Common myeloid progenitor, CD34-positive (primary cell): ENCODE measurements at regions of chr12 and their contacts with region 1.

Region 1: GRCh38 chr12:66235626-66236281 is 46.7 kb downstream of the IRAK3 start:
- DNase-seq: peak; percentile 35 to 75 (median 61)
- H3K4me3 ChIP-seq: peak overlapping the region; percentile 40 to 82 (median 65)
- H3K27ac ChIP-seq: peak overlapping the region; percentile 33 to 63
- H3K4me1 ChIP-seq: peaks cover 0 to 14% (median 4%) of the 10 kb centered on the region in 4 experiments
- H3K27me3 ChIP-seq: no peaks in the 10 kb centered on the region

Region 2: DNA sequence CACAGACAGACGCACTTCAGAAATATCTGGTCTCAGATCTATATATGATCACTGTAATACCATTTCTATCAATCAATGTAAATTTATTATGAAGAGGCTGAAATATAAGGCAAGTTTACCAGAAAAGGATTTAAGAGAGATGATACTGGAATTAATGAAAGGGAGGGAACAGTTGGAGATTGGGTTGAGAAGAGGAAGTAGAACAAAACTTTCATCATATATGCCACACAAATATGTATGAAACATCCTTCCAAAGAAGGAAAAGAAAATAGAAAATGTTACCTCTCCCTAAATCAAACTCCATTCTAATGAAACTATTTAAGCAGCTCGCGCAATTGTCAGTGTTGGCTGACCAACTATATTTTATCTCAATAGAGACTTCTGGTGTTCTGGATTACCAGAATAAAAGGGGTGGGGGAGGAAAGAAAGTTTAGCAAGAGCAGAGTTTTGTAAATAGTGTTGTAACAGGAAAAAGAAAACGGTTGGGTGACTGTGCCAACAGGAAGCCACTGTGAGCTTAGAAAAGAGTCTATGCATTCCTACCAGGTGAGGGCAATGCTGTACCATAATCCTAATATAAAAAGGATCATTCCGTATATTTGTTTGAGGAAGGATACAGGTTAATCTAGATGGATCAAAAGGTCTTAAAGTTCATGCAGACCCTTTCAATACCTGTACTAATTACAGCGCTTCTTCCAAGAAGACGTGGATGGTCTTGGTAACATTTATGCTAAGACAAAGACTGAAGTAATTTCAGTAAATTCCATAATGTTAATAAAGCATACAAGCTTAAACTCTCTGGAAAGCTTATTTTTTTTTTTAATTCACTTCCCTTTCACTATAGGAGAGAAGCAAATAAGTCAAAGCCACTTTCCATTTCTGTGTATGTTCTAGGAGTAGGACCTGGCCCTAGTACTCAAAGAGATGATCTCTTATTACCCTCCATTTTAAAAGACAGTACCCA is 90.7 kb before region 1 on chr12:
- CTCF ChIA-PET with region 1: interaction called, 14 read pairs
- POLR2A ChIA-PET with region 1: no interaction called
- DNase-seq: peak; percentile 90 to 95 (median 93)
- H3K4me3 ChIP-seq: peak overlapping the region in 6 of 7 experiments; percentile 15 to 63 (median 34)
- H3K27ac ChIP-seq: peak overlapping the region; percentile 78 to 90
- H3K4me1 ChIP-seq: peaks cover 16 to 40% (median 25%) of the 10 kb centered on the region in 4 experiments
- H3K27me3 ChIP-seq: no peaks in the 10 kb centered on the region